ENCODE measurements at regions of chr15 and their contacts with region 1.

Region 1: DNA sequence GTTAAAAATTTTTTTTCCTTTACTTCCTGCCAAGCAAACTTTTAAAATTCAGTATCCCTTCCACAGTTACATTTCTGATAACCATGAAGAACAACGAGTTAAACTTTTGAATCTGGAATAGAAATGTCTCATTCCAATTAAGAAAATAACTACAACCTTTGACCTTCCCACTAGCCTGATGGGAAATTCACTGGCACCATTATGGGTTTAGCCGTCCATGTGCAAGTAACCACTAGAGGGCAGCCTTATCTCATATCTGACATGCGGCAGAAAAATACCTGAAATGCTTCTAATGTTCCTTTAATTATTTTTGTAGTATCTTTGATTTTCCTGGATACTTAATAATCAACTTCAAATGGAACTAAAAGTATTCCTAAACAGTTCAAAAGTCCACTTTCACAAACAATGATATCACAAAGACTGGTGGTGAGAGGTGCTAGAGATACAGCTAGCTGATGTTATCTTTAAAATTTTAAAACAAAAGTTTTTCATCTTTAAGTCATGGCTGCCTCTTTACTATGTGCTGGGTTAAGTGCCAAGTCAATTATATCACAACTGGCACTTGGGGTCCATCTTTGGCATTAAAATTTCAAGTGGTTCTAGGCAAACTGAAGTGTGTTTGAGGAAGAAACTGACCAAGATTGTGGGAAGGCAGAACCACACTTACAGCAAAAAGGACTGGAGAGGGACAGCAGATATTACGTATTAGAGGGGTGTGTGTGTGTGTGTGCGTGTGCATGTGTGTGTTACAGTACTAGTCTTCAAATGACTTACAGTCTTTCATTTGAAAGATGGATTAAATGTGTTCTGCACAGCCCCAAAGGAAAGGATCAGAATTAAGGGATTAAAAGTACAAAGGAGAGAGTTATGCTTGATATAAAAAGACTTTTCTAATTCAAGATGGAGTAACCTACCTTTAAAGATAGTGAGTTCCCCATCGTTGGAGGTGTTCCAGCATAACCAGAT is 107.1 kb upstream of the ICE2 start:
- DNase-seq: peak in 1 of 2 donors; percentile 91
- ATAC-seq: peak; percentile 18 to 59 (median 33)
- H3K4me3 ChIP-seq: no peak overlapping the region
- H3K4me3 Mint-ChIP-seq: peak overlapping the region; percentile 97
- H3K27ac ChIP-seq: peak overlapping the region; percentile 68
- H3K27ac Mint-ChIP-seq: peak overlapping the region; percentile 93
- H3K4me1 ChIP-seq: peaks cover 31% of the 10 kb centered on the region
- H3K4me1 Mint-ChIP-seq: peaks cover 89 to 95% of the 10 kb centered on the region in 2 donors
- H3K27me3 ChIP-seq: no peaks in the 10 kb centered on the region
- H3K27me3 Mint-ChIP-seq: no peaks in the 10 kb centered on the region
- CTCF ChIP-seq: peak; percentile 92

Region 2: DNA sequence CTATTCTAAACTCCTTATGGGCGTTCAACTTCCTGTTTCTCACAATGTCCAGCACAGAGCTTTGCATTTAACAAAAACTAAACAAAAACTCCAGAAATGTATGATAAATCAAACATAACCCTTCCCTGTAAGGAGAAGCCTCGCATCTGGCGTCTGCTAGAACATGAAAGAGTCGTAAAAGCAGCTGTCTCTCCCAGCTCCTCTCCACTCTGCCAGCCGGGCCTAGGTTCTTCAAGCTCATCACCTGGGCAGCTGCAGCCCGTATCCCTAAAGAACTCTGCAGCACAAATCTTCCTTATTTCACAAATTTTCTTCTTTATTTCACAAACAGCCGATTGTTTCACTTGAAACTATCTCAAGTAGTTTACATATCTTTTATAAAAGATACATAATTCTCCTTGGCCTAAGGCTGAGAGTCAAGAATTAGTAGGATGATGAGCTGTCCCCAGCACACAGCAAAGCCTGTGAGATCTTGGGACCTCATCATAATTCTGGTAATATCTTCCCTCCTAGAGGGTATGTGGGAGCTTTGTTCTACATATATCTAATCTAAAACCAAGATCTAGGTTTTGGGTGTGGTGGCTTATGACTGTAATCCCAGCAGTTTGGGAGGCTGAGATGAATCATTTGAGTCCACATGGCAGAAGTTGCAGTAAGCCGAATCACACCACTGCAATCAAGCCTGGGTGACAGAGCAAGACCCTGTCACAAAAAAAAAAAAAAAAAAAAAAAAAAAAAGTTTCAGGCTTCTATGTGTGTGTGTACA is 223.5 kb before region 1 on chr15:
- intact Hi-C with region 1: no loop called
- DNase-seq: peak in 1 of 2 donors; percentile 8
- ATAC-seq: no peak
- H3K4me3 ChIP-seq: no peak overlapping the region
- H3K4me3 Mint-ChIP-seq: no peak overlapping the region
- H3K27ac ChIP-seq: no peak overlapping the region
- H3K27ac Mint-ChIP-seq: peak overlapping the region; percentile 0 to 26
- H3K4me1 ChIP-seq: no peaks in the 10 kb centered on the region
- H3K4me1 Mint-ChIP-seq: peaks cover 11 to 15% of the 10 kb centered on the region in 2 donors
- H3K27me3 ChIP-seq: no peaks in the 10 kb centered on the region
- H3K27me3 Mint-ChIP-seq: no peaks in the 10 kb centered on the region
- CTCF ChIP-seq: no peak

Region 3: GRCh38 chr15:60397772-60398445 is 188.1 kb before region 1 on chr15 and contains the start of gene ANXA2:
- intact Hi-C with region 1: loop called (anchors 5 kb)
- DNase-seq: peak; percentile 72 to 89
- ATAC-seq: peak; percentile 70 to 83 (median 78)
- H3K4me3 ChIP-seq: peak within 1 kb of the TSS; percentile 65
- H3K4me3 Mint-ChIP-seq: peak within 1 kb of the TSS; percentile 89
- H3K27ac ChIP-seq: peak within 1 kb of the TSS; percentile 71
- H3K27ac Mint-ChIP-seq: peak within 1 kb of the TSS; percentile 92 to 93
- H3K4me1 ChIP-seq: peaks cover 30% of the 10 kb centered on the region
- H3K4me1 Mint-ChIP-seq: peaks cover 47 to 57% of the 10 kb centered on the region in 2 donors
- H3K27me3 ChIP-seq: no peaks in the 10 kb centered on the region
- H3K27me3 Mint-ChIP-seq: no peaks in the 10 kb centered on the region
- CTCF ChIP-seq: no peak
- total RNA-seq, gene ANXA2: 132 to 230 (median 155) TPM

Region 4: GRCh38 chr15:60541481-60542299 is 44.3 kb before region 1 on chr15:
- intact Hi-C with region 1: loop called (anchors 1 kb)
- DNase-seq: peak in 1 of 2 donors; percentile 44
- ATAC-seq: peak; percentile 54 to 70 (median 69)
- H3K4me3 ChIP-seq: no peak overlapping the region
- H3K4me3 Mint-ChIP-seq: peak overlapping the region; percentile 79
- H3K27ac ChIP-seq: peak overlapping the region; percentile 73
- H3K27ac Mint-ChIP-seq: peak overlapping the region; percentile 93 to 95
- H3K4me1 ChIP-seq: peaks cover 54% of the 10 kb centered on the region
- H3K4me1 Mint-ChIP-seq: peaks cover 98% of the 10 kb centered on the region in 2 donors
- H3K27me3 ChIP-seq: no peaks in the 10 kb centered on the region
- H3K27me3 Mint-ChIP-seq: no peaks in the 10 kb centered on the region
- CTCF ChIP-seq: no peak

Region 5: GRCh38 chr15:60557191-60557618 is 28.8 kb before region 1 on chr15:
- intact Hi-C with region 1: loop called (anchors 1 kb)
- DNase-seq: peak in 1 of 2 donors; percentile 67
- ATAC-seq: peak; percentile 72 to 80 (median 73)
- H3K4me3 ChIP-seq: no peak overlapping the region
- H3K4me3 Mint-ChIP-seq: peak overlapping the region; percentile 72
- H3K27ac ChIP-seq: peak overlapping the region; percentile 30
- H3K27ac Mint-ChIP-seq: peak overlapping the region; percentile 93 to 95
- H3K4me1 ChIP-seq: peaks cover 26% of the 10 kb centered on the region
- H3K4me1 Mint-ChIP-seq: peaks cover 76 to 80% of the 10 kb centered on the region in 2 donors
- H3K27me3 ChIP-seq: no peaks in the 10 kb centered on the region
- H3K27me3 Mint-ChIP-seq: no peaks in the 10 kb centered on the region
- CTCF ChIP-seq: no peak

Region 6: DNA sequence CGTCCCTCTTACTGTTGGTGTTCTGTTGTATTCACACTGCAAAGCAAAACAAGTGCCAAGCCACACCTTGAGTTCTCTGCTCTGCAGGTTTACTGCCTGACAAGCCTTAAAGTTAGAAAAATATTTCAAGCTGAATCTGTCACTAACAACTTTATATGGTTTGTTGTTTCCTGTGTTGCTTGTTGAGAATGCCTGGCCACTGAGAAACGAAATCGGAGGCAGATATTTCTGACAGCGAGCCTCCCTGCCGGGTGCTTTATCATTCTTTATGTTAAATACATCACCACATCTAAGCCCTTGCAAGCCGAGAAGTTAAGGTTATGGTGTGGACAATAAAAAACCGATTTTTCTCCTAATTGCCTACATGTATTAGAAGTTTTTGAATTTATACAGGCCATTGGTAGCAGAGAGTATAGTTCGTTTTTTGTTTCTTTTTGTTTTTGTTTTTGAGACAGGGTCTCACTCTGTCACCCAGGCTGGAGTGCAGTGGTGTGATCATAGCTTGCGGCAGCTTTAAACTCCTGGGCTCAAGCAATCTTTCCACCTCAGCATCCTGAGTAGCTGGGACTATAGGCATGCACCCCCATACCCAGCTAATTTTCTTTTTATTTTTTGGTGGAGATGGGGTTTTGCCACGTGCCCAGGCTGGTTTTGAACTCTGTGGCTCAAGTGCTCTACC is 81.3 kb after region 1 on chr15:
- intact Hi-C with region 1: loop called (anchors 5 kb)
- DNase-seq: peak in 1 of 2 donors; percentile 16
- ATAC-seq: peak; percentile 77 to 87 (median 78)
- H3K4me3 ChIP-seq: no peak overlapping the region
- H3K4me3 Mint-ChIP-seq: peak overlapping the region; percentile 88
- H3K27ac ChIP-seq: peak overlapping the region; percentile 24
- H3K27ac Mint-ChIP-seq: peak overlapping the region; percentile 89
- H3K4me1 ChIP-seq: peaks cover 15% of the 10 kb centered on the region
- H3K4me1 Mint-ChIP-seq: peaks cover 20 to 25% of the 10 kb centered on the region in 2 donors
- H3K27me3 ChIP-seq: no peaks in the 10 kb centered on the region
- H3K27me3 Mint-ChIP-seq: no peaks in the 10 kb centered on the region
- CTCF ChIP-seq: no peak

Region 7: DNA sequence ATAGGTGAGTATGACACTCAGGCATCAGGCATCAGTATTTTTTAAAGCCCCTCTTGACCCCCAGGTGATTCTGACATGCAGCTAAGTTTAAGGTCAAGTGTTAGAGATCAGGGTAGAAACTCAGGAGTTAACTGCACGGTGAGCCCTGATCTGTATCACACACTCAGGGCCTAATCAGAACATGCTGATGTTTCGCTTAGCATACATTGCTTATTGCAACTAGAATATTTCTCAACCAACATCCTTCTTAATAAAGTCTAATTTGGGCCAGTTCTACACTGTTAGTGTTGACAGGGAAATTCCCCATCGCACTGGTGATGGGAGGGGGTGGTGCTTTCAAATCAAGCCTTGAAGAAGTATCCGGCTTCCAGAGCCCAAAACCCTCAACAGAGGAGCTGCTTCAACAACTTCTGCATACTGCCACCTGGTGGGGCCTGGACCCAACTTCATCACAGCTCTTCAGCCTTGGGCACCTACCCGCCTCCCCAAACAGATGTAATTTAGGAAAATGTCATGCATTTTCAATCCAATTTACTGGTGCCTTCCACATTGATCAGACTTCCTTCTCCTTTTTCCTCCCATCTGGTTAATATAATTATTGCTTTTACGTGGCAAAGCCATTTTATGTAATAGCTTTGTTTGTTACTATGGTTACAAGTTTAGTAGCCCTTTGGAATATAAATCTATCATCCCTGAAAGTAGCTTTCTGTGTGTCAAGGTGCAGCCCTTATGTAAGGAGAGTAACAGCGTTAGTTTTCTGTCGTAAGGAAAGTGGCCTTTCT is 330.8 kb after region 1 on chr15:
- intact Hi-C with region 1: loop called (anchors 1 kb)
- DNase-seq: peak; percentile 76 to 96
- ATAC-seq: peak; percentile 94 to 98 (median 96)
- H3K4me3 ChIP-seq: no peak overlapping the region
- H3K4me3 Mint-ChIP-seq: no peak overlapping the region
- H3K27ac ChIP-seq: peak overlapping the region; percentile 12
- H3K27ac Mint-ChIP-seq: peak overlapping the region; percentile 82 to 83
- H3K4me1 ChIP-seq: peaks cover 7% of the 10 kb centered on the region
- H3K4me1 Mint-ChIP-seq: peaks cover 8 to 13% of the 10 kb centered on the region in 2 donors
- H3K27me3 ChIP-seq: no peaks in the 10 kb centered on the region
- H3K27me3 Mint-ChIP-seq: no peaks in the 10 kb centered on the region
- CTCF ChIP-seq: peak; percentile 88

Region 8: GRCh38 chr15:61063875-61064320 is 477.9 kb after region 1 on chr15:
- intact Hi-C with region 1: no loop called
- DNase-seq: no peak
- ATAC-seq: no peak
- H3K4me3 ChIP-seq: no peak overlapping the region
- H3K4me3 Mint-ChIP-seq: no peak overlapping the region
- H3K27ac ChIP-seq: no peak overlapping the region
- H3K27ac Mint-ChIP-seq: no peak overlapping the region
- H3K4me1 ChIP-seq: no peaks in the 10 kb centered on the region
- H3K4me1 Mint-ChIP-seq: no peaks in the 10 kb centered on the region
- H3K27me3 ChIP-seq: no peaks in the 10 kb centered on the region
- H3K27me3 Mint-ChIP-seq: peaks cover 7 to 37% of the 10 kb centered on the region in 2 donors
- CTCF ChIP-seq: no peak

Measured in natural killer cell (primary cell).